Panc1 (cell line): ENCODE measurements at regions of chr6 and their contacts with region 1.

Region 1: GRCh38 chr6:87393022-87393622 is 14.7 kb upstream of the CFAP206 start:
- DNase-seq: peak; percentile 36
- ATAC-seq: peak; percentile 93
- H3K4me3 ChIP-seq: no peak overlapping the region
- H3K27ac ChIP-seq: no peak overlapping the region
- H3K4me1 ChIP-seq: no peaks in the 10 kb centered on the region
- H3K27me3 ChIP-seq: no peaks in the 10 kb centered on the region
- CTCF ChIP-seq: peak; percentile 76; the same call in 1 of the 2 replicates

Region 2: GRCh38 chr6:87093651-87094050 is 299.5 kb before region 1 on chr6:
- CTCF ChIA-PET with region 1: interaction called, 12 read pairs
- POLR2A ChIA-PET with region 1: no interaction called
- in situ Hi-C with region 1: no loop called
- intact Hi-C with region 1: no loop called
- DNase-seq: no peak
- ATAC-seq: no peak
- H3K4me3 ChIP-seq: no peak overlapping the region
- H3K27ac ChIP-seq: no peak overlapping the region
- H3K4me1 ChIP-seq: no peaks in the 10 kb centered on the region
- H3K27me3 ChIP-seq: peaks cover 34% of the 10 kb centered on the region
- CTCF ChIP-seq: no peak

Region 3: DNA sequence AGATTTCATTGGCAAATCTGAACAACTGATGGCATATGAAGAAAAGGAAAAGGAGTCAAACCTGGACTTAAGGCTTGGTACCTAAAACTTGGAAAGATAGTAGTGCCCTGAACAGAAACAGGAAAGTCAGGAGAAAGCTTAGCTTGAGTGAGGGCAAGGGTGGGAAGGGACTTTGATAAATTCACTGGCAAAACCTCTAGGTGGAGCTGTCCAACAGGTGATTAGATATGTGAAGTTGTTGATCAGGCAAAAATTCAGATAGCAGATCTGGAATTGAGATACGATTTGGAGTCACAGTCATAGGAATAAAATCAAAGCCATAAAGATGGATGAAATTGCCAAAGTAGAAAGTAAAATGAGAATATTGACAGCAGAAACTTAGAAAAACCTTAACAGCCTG is 253.9 kb before region 1 on chr6:
- CTCF ChIA-PET with region 1: no interaction called
- POLR2A ChIA-PET with region 1: no interaction called
- in situ Hi-C with region 1: no loop called
- intact Hi-C with region 1: loop called (anchors 5 kb)
- DNase-seq: no peak
- ATAC-seq: peak; percentile 84
- H3K4me3 ChIP-seq: no peak overlapping the region
- H3K27ac ChIP-seq: no peak overlapping the region
- H3K4me1 ChIP-seq: no peaks in the 10 kb centered on the region
- H3K27me3 ChIP-seq: no peaks in the 10 kb centered on the region; the same call in 1 of the 2 replicates
- CTCF ChIP-seq: peak; percentile 78

Region 4: GRCh38 chr6:87277123-87277522 is 116.0 kb before region 1 on chr6:
- CTCF ChIA-PET with region 1: interaction called, 4 read pairs
- POLR2A ChIA-PET with region 1: no interaction called
- in situ Hi-C with region 1: no loop called
- intact Hi-C with region 1: loop called (anchors 5 kb)
- DNase-seq: no peak
- ATAC-seq: peak; percentile 84
- H3K4me3 ChIP-seq: no peak overlapping the region
- H3K27ac ChIP-seq: no peak overlapping the region
- H3K4me1 ChIP-seq: no peaks in the 10 kb centered on the region
- H3K27me3 ChIP-seq: no peaks in the 10 kb centered on the region
- CTCF ChIP-seq: peak; percentile 62; the same call in 1 of the 2 replicates

Region 5: GRCh38 chr6:87431273-87431672 is 38.2 kb after region 1 on chr6:
- CTCF ChIA-PET with region 1: no interaction called
- POLR2A ChIA-PET with region 1: no interaction called
- in situ Hi-C with region 1: no loop called
- intact Hi-C with region 1: no loop called
- DNase-seq: no peak
- ATAC-seq: no peak
- H3K4me3 ChIP-seq: no peak overlapping the region
- H3K27ac ChIP-seq: no peak overlapping the region
- H3K4me1 ChIP-seq: no peaks in the 10 kb centered on the region
- H3K27me3 ChIP-seq: no peaks in the 10 kb centered on the region
- CTCF ChIP-seq: no peak

Region 6: GRCh38 chr6:87494761-87495422 is 101.8 kb after region 1 on chr6:
- CTCF ChIA-PET with region 1: no interaction called
- POLR2A ChIA-PET with region 1: interaction called, 14 read pairs
- in situ Hi-C with region 1: no loop called
- intact Hi-C with region 1: no loop called
- DNase-seq: no peak
- ATAC-seq: no peak
- H3K4me3 ChIP-seq: no peak overlapping the region
- H3K27ac ChIP-seq: no peak overlapping the region
- H3K4me1 ChIP-seq: no peaks in the 10 kb centered on the region
- H3K27me3 ChIP-seq: no peaks in the 10 kb centered on the region
- CTCF ChIP-seq: no peak